Aorta (tissue), 5 donors: ENCODE measurements at regions of chr10 and their contacts with region 1.

Region 1: DNA sequence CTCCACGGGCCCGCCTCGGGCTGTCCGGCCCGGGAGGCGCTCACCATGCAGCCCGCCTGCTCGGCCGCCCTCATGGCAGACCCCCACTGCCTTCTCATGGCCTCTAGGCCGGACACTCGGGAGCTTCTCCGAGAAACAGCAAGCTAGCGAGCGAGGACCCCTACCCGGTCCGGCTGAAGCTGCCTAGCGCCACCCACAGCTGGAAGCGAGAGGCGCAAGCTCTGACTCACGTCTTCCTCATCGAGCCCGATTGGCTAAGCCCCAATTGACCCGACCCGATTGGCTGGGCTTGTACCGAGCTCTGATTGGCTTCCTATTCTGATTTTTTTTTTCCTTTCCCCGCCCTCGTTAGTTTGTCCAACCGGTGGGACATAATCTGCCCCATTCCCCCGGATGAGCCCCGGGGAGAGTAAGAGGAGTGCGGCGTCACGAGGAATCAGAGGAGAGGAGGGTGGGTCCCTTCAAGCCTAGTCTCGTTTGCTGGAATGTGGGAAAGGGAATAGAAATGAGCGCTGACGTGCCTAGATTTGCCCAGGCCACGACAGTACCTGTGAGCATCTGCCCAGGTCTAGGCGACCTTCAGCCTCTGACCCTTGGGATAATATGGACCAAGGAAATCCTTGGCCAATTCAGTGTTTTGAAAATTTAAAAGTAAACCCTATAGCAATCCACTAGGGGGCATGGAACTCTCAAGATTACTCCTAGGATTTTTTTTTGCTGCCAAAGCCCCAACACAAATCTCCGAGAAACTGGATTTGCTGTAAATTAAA is at the start of gene TYSND1:
- DNase-seq: peak; percentile 97 to 98
- ATAC-seq: peak; percentile 96
- H3K4me3 ChIP-seq: peak within 1 kb of the TSS; percentile 45 to 64
- H3K27ac ChIP-seq: peak within 1 kb of the TSS; percentile 29 to 94
- H3K4me1 ChIP-seq: no peaks in the 10 kb centered on the region
- H3K27me3 ChIP-seq: no peaks in the 10 kb centered on the region
- total RNA-seq, gene TYSND1: 5.4 to 10.9 TPM

Region 2: GRCh38 chr10:70115948-70116682 is 30.6 kb before region 1 on chr10:
- intact Hi-C with region 1: loop called in 1 of 2 experiments (anchors 2 kb)
- DNase-seq: peak in 1 of 2 donors; percentile 69
- ATAC-seq: peak; percentile 61
- H3K4me3 ChIP-seq: no peak overlapping the region
- H3K27ac ChIP-seq: no peak overlapping the region
- H3K4me1 ChIP-seq: no peaks in the 10 kb centered on the region
- H3K27me3 ChIP-seq: no peaks in the 10 kb centered on the region

Region 3: DNA sequence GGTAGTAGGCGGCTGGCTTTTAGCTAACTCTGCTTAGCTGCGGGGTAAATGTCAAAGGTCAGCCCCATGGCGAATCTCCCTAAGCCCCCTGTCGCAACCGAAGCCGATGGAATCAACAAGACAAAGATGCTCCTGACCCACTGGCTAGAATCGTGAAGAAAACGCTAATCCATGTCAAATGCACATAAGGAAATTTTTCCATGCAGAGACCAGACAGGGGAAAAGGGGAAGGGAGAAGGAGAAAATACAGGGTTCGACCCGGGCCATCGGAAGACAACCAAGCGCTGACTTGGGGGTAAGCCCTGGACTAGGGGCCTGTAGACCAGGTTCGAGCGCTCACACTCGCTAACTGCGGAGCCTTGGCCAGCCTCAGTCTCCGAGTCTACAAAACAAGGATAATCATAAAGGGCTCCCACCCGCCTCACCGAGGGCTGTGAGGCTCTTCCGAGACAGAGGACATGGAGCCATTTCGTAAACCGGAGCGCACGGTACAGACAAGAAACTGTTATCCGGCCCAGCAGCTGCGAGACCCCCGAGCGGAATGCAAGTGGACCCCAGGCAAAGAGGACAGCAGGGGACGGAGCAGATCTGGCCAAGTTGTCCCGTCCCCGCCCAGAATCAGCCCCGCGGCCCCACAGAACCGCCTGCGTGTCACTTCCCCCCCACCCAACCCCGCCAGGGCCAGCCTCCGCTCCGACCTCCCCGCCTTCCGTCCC is 23.1 kb after region 1 on chr10:
- intact Hi-C with region 1: loop called in 1 of 2 experiments (anchors 2 kb)
- DNase-seq: no peak
- ATAC-seq: peak; percentile 64
- H3K4me3 ChIP-seq: peak overlapping the region; percentile 90 to 98
- H3K27ac ChIP-seq: peak overlapping the region in 1 of 2 donors; percentile 94
- H3K4me1 ChIP-seq: peaks cover 0 to 3% of the 10 kb centered on the region in 2 donors
- H3K27me3 ChIP-seq: peaks cover 0 to 1% of the 10 kb centered on the region in 2 donors